ENCODE measurements at regions of chr16 and their contacts with region 1.

Region 1: DNA sequence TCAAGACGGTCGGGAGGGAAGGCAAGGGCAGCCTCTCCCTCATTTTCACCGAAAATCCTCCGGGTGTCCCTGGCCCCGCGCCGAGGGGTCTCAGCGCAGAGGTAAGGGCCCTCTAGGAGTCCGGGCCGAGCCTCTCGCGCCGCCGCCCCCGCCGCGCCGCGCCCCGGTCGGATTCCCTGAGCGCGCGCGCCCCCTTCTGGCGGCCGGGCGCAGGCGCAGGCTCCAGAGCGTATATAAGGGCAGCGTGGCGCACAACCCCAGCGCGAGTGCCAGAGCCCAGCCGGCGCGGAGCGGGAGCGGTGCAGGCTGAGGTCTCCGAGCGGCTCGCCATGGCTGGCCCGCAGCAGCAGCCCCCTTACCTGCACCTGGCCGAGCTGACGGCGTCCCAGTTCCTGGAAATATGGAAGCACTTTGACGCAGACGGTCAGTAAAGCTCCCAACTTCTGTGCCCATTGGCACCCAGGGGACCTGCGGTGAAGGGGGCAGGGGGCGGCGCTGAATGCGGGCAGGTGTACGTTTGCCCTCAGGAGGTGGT is at the start of gene CALB2:
- DNase-seq: peak; percentile 62
- H3K27ac ChIP-seq: no peak within 1 kb of the TSS
- CTCF ChIP-seq: peak; percentile 98

Region 2: GRCh38 chr16:71249399-71249798 is 109.1 kb before region 1 on chr16:
- CTCF ChIA-PET with region 1: interaction called, 10 read pairs
- POLR2A ChIA-PET with region 1: no interaction called
- DNase-seq: no peak
- H3K27ac ChIP-seq: no peak overlapping the region
- CTCF ChIP-seq: no peak